PC-9 (cell line): ENCODE measurements at regions of chr7 and their contacts with region 1.

Region 1: DNA sequence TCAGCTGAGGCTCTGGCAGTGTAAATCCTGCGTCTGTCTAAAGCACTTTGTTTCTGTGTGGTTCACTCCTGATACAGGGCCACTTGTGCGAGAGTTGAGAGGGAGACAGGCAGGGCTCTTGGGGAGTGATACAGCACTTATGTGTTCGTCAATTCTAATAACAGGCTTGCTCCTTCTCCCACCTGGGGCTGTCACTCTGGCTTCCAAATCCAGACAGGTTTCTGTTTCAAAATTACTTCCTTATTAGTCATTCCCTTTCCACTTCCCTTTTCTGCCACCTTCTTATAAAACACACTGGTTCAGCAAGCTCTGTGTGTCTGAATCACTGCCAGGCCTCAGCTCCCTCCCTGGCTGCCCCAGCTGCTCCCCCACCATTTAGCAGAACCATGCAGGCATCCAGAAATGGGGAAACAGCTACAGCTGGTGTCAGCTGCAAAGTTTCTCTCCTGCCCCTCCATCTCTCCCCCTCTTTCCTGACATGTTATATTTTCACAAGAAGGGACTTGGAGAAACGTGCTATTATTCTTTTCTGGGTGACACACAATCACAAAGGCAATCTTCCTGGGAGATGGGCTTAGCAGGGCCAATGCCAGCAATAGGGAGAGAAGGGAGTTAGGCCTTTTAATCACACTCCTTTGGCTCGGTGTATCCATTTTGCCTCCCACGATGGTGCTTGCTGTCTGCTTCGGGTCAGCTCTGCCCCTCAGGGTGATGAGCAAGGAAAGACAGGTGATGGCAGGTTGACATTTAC is 58.4 kb upstream of the ZNRF2 start:
- DNase-seq: peak; percentile 84 to 99
- H3K4me3 ChIP-seq: peak overlapping the region; percentile 43
- H3K27ac ChIP-seq: peak overlapping the region; percentile 97
- H3K4me1 ChIP-seq: peaks cover 33% of the 10 kb centered on the region
- H3K27me3 ChIP-seq: no peaks in the 10 kb centered on the region
- CTCF ChIP-seq: no peak

Region 2: DNA sequence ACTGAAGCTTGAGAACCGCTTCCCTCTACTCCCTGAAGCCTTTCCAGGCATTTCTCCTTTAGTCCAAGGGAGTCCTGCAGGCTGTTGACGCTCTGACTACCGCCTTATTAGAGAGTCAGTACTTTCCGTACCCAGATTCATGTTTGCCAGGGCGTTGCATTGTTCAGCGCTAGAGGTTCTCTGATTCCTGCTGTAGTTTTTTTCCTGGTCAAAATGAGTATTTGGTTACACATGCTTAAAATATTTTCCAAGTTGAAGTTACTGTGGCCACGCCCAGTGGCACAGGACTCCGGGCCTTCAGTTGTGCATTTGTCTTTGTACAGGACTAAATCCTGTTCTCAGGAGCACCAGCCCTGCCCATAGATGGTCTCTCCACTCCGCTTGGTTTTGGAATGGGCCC is 83.3 kb before region 1 on chr7:
- CTCF ChIA-PET with region 1: interaction called, 3 read pairs
- POLR2A ChIA-PET with region 1: no interaction called
- intact Hi-C with region 1: loop called (anchors 1 kb)
- DNase-seq: peak; percentile 84 to 97
- H3K4me3 ChIP-seq: peak overlapping the region; percentile 10; the same call in 1 of the 2 replicates
- H3K27ac ChIP-seq: peak overlapping the region; percentile 72
- H3K4me1 ChIP-seq: peaks cover 33% of the 10 kb centered on the region
- H3K27me3 ChIP-seq: peaks cover 27% of the 10 kb centered on the region; the same call in 1 of the 2 replicates
- CTCF ChIP-seq: no peak

Region 3: GRCh38 chr7:30206491-30206890 is 19.5 kb before region 1 on chr7:
- CTCF ChIA-PET with region 1: interaction called, 3 read pairs
- POLR2A ChIA-PET with region 1: interaction called, 6 read pairs
- intact Hi-C with region 1: loop called (anchors 1 kb)
- DNase-seq: peak; percentile 79 to 88
- H3K4me3 ChIP-seq: peak overlapping the region; percentile 27; the same call in 1 of the 2 replicates
- H3K27ac ChIP-seq: peak overlapping the region; percentile 65
- H3K4me1 ChIP-seq: peaks cover 15% of the 10 kb centered on the region
- H3K27me3 ChIP-seq: no peaks in the 10 kb centered on the region
- CTCF ChIP-seq: no peak

Region 4: GRCh38 chr7:30412810-30413504 is 186.9 kb after region 1 on chr7:
- CTCF ChIA-PET with region 1: no interaction called
- POLR2A ChIA-PET with region 1: no interaction called
- intact Hi-C with region 1: loop called (anchors 1 kb)
- DNase-seq: peak; percentile 40 to 80
- H3K4me3 ChIP-seq: no peak overlapping the region
- H3K27ac ChIP-seq: no peak overlapping the region
- H3K4me1 ChIP-seq: no peaks in the 10 kb centered on the region
- H3K27me3 ChIP-seq: no peaks in the 10 kb centered on the region
- CTCF ChIP-seq: peak; percentile 84